ENCODE measurements at regions of chr12 and their contacts with region 1.

Region 1: DNA sequence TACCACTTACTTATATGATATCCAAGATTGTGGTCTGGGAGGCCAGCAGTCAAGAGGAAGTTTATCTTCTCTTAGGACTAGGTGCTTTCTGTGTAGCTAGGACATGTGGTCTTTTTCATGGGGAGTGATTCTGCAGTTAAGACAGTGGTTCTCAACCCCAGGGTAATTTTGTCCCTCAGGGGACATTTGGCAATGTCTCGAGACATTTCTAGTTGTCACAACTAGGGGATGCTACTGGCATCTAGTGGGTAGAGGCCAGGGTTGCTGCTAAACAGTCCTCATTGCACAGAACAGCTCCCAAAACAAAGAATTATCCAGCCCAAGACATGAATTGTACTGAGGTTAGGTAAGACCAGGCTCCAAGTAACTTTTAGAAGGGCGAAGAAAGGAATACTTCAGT is 20.0 kb downstream of the AMDHD1 start:
- DNase-seq: no peak
- H3K4me3 ChIP-seq: no peak overlapping the region
- H3K27ac ChIP-seq: no peak overlapping the region
- H3K4me1 ChIP-seq: no peaks in the 10 kb centered on the region
- H3K27me3 ChIP-seq: no peaks in the 10 kb centered on the region
- CTCF ChIP-seq: no peak
- POLR2A ChIP-seq: no peak

Region 2: GRCh38 chr12:97837401-97837800 is 1874.3 kb after region 1 on chr12:
- intact Hi-C with region 1: loop called (anchors 10 kb)
- DNase-seq: no peak
- H3K4me3 ChIP-seq: no peak overlapping the region
- H3K27ac ChIP-seq: no peak overlapping the region
- H3K4me1 ChIP-seq: no peaks in the 10 kb centered on the region
- H3K27me3 ChIP-seq: no peaks in the 10 kb centered on the region
- CTCF ChIP-seq: no peak
- POLR2A ChIP-seq: no peak